Sciatic nerve (tissue), 2 donors: ENCODE measurements at regions of chr6 and their contacts with region 1.

Region 1: DNA sequence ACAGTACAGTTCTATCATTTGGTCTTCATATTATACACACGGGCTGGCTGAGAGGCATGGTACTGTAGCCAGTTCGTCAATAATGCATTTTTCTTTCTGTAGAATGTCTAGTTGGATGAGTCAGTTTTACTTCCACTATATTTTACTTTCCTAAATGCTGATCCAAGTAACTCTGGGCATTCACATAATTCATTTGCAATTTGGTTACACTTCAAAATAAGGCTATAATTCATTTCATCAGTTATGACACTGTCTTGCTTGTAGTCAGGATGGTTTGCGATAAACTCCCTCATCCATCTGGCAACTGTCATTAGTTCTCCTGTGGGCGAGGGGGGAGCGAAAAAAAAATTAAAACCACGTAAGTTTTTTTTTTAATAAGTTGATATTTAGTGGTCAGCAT is 46.3 kb downstream of the GCLC start:
- DNase-seq: no peak
- ATAC-seq: no peak

Region 2: GRCh38 chr6:53725791-53726431 is 227.3 kb after region 1 on chr6:
- intact Hi-C with region 1: loop called (anchors 2 kb)
- DNase-seq: peak; percentile 88
- ATAC-seq: peak; percentile 89